ENCODE measurements at regions of chr1 and their contacts with region 1.

Region 1: DNA sequence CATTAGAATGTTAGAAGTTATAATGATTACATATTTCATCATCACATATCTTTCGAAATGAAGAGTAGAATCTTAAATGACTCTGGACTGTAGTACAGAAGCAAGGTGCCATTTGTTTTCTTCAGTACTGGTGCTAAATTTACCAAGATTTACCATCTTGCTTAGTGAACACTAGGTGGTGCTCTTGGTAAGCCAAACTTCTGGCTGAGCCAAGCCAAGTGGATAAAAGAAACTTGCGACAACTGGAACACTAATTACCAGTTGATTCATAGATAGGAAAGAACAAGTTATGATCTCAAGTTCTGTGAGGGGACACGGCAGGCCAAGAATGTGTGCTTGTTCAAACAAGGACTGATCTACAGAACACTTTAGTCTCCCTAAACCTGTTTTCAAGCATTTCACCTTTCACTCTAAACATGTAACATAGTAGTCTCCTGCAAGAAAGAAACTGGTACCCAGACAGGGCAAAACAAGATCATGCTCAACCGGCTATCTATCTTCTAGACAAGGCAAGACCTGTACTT is 19.8 kb downstream of the SPRTN start:
- DNase-seq: no peak
- H3K4me3 ChIP-seq: no peak overlapping the region
- H3K27ac ChIP-seq: peak overlapping the region in 2 of 4 donors; percentile 15 to 29
- H3K4me1 ChIP-seq: peaks cover 5 to 12% (median 8%) of the 10 kb centered on the region in 4 donors
- H3K27me3 ChIP-seq: no peaks in the 10 kb centered on the region
- CTCF ChIP-seq: peak; percentile 75 to 80 (median 77)
- EP300 ChIP-seq: no peak
- POLR2A ChIP-seq: no peak

Region 2: DNA sequence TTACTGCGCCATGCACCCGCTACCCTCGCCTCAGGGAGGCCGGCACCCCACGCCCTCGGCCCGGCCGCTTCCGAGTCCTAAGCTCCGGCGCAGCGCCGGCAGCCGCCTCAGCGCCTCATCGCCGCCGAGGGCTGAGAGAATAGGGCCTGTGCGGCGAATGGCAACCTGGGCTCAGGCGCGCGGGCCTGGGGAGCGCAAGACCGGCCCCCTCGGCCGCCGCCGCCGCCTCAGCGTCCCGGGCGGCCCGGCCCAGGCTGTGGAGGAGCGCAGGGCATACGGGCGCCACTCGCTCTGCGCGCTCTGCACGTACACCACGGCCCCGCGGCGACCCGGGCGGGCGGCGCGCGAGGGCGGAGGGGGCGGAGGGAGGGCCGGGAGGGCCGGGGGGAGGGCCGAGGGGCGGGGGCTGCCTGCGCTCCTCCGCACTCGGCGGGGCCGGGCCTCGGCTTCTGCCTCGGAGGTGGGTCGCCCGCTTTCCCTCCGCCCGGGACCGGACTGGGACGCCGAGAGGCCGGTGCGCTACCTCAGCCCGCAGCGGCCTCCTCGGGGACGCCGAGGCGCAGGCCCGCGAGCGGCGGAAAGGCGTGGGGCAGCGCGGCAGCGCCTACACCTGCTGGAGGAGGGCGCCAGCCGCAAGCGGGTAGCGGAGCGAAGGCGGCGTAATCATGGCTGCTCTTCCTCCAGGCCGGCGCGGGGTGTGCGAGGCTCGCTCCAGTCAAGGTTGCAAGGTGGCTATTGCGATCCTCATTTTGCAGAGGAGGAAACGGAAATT is 64.3 kb after region 1 on chr1 and contains the start of gene EGLN1:
- intact Hi-C with region 1: loop called (anchors 5 kb)
- DNase-seq: peak; percentile 94
- H3K4me3 ChIP-seq: peak within 1 kb of the TSS; percentile 91 to 94 (median 92)
- H3K27ac ChIP-seq: peak within 1 kb of the TSS; percentile 98 to 99 (median 99)
- H3K4me1 ChIP-seq: peaks cover 42 to 47% (median 42%) of the 10 kb centered on the region in 4 donors
- H3K27me3 ChIP-seq: no peaks in the 10 kb centered on the region
- CTCF ChIP-seq: peak in 2 of 3 experiments; percentile 29 to 35
- EP300 ChIP-seq: no peak
- POLR2A ChIP-seq: peak; percentile 69
- total RNA-seq, gene EGLN1: 43.9 to 79.9 (median 58.7) TPM

Region 3: GRCh38 chr1:231528172-231529029 is 170.5 kb after region 1 on chr1 and contains the start of gene TSNAX:
- intact Hi-C with region 1: loop called (anchors 5 kb)
- DNase-seq: peak; percentile 97
- H3K4me3 ChIP-seq: peak within 1 kb of the TSS; percentile 63 to 83 (median 75)
- H3K27ac ChIP-seq: peak within 1 kb of the TSS; percentile 90 to 94 (median 92)
- H3K4me1 ChIP-seq: peaks cover 24 to 50% (median 47%) of the 10 kb centered on the region in 4 donors
- H3K27me3 ChIP-seq: no peaks in the 10 kb centered on the region
- CTCF ChIP-seq: no peak
- EP300 ChIP-seq: no peak
- POLR2A ChIP-seq: peak; percentile 83
- total RNA-seq, gene TSNAX: 20.4 to 29.6 (median 24.7) TPM

Region 4: GRCh38 chr1:231590453-231591198 is 232.7 kb after region 1 on chr1:
- intact Hi-C with region 1: loop called (anchors 1 kb)
- DNase-seq: no peak
- H3K4me3 ChIP-seq: no peak overlapping the region
- H3K27ac ChIP-seq: no peak overlapping the region
- H3K4me1 ChIP-seq: peaks cover 0 to 12% (median 9%) of the 10 kb centered on the region in 4 donors
- H3K27me3 ChIP-seq: no peaks in the 10 kb centered on the region
- CTCF ChIP-seq: peak; percentile 72 to 77 (median 73)
- EP300 ChIP-seq: no peak
- POLR2A ChIP-seq: no peak

Measured in esophagus muscularis mucosa (tissue), 4 donors.